ENCODE measurements at regions of chr1 and their contacts with region 1.

Region 1: DNA sequence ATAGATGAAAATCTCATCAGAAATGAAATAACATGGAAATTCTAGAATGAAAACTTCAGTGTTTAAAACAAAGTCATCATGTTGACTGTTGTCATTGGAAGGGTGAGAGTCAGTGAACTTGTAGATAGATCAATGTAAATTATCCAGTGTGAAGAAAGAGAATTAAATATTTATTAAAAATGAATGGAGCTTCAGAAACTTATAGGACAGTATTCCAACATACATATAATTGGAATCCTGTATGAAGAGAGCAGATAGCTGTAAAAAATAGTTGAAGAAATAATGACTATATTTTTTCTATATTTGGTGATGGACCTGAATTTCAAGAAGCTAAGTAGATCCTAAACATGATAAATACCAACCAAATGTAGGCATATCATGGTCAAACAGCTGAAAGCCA is 60.0 kb downstream of the MAN1A2 start:
- DNase-seq: no peak
- ATAC-seq: no peak
- H3K4me3 Mint-ChIP-seq: no peak overlapping the region
- H3K27ac Mint-ChIP-seq: no peak overlapping the region
- H3K4me1 Mint-ChIP-seq: no peaks in the 10 kb centered on the region
- H3K27me3 Mint-ChIP-seq: no peaks in the 10 kb centered on the region
- CTCF ChIP-seq: no peak

Region 2: GRCh38 chr1:117093870-117094621 is 333.3 kb before region 1 on chr1:
- CTCF ChIA-PET with region 1: no interaction called
- POLR2A ChIA-PET with region 1: no interaction called
- intact Hi-C with region 1: no loop called
- DNase-seq: no peak
- ATAC-seq: peak; percentile 66
- H3K4me3 Mint-ChIP-seq: no peak overlapping the region
- H3K27ac Mint-ChIP-seq: no peak overlapping the region
- H3K4me1 Mint-ChIP-seq: peaks cover 5% of the 10 kb centered on the region
- H3K27me3 Mint-ChIP-seq: no peaks in the 10 kb centered on the region
- CTCF ChIP-seq: no peak

Region 3: GRCh38 chr1:117367047-117368018 is 60.0 kb before region 1 on chr1 and contains the start of gene MAN1A2:
- CTCF ChIA-PET with region 1: no interaction called
- POLR2A ChIA-PET with region 1: no interaction called
- intact Hi-C with region 1: no loop called
- DNase-seq: peak; percentile 82
- ATAC-seq: peak; percentile 72
- H3K4me3 Mint-ChIP-seq: peak within 1 kb of the TSS; percentile 95
- H3K27ac Mint-ChIP-seq: peak within 1 kb of the TSS; percentile 91
- H3K4me1 Mint-ChIP-seq: peaks cover 68% of the 10 kb centered on the region
- H3K27me3 Mint-ChIP-seq: no peaks in the 10 kb centered on the region
- CTCF ChIP-seq: no peak
- total RNA-seq, gene MAN1A2: 43.3 and 46.0 TPM in 2 replicates

Region 4: GRCh38 chr1:117388328-117388727 is 39.0 kb before region 1 on chr1:
- CTCF ChIA-PET with region 1: no interaction called
- POLR2A ChIA-PET with region 1: no interaction called
- intact Hi-C with region 1: loop called (anchors 5 kb)
- DNase-seq: no peak
- ATAC-seq: peak; percentile 14
- H3K4me3 Mint-ChIP-seq: no peak overlapping the region
- H3K27ac Mint-ChIP-seq: peak overlapping the region; percentile 46
- H3K4me1 Mint-ChIP-seq: peaks cover 64% of the 10 kb centered on the region
- H3K27me3 Mint-ChIP-seq: no peaks in the 10 kb centered on the region
- CTCF ChIP-seq: no peak

Measured in activated B cell treated with CpG ODN at 0.5 μM for 24 hours (primary cell).